ENCODE measurements at regions of chr17 and their contacts with region 1.

Region 1: GRCh38 chr17:43695970-43696865 is 34.5 kb upstream of the MEOX1 start:
- DNase-seq: peak in 1 of 2 donors; percentile 49
- H3K4me3 ChIP-seq: no peak overlapping the region
- H3K27ac ChIP-seq: no peak overlapping the region
- H3K4me1 ChIP-seq: peaks cover 0 to 12% (median 5%) of the 10 kb centered on the region in 4 donors
- H3K27me3 ChIP-seq: peaks cover 0 to 8% (median 0%) of the 10 kb centered on the region in 3 donors
- CTCF ChIP-seq: no peak
- EP300 ChIP-seq: no peak
- POLR2A ChIP-seq: no peak

Region 2: DNA sequence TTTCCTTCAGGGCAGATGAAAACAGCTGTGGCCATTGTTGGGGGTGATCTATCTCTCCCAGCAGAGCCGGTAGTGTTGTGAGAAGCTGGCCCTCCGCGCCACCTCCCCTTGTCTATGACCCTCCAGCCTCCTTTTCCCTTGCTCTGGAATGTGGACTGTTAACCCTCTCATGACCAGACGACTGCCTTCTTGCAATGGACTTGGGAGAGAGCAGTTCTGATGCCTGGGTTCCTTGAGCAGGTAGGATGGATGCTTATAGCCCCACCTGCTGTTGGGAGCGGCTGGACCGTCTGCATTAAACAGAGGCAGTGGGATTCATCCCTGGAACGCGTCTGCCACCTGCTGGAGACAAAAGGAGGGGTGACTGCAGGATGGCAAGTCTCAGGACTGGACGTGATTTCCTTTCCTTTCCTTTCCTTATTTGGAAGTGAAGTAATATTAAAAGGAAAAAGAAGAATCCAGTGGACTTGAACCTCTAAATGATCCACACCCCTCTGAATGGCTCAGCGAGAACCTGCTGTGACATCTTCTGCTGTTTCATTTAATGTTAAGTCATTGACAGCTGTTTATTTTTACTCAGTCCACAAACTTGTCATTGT is 64.1 kb after region 1 on chr17:
- intact Hi-C with region 1: loop called (anchors 5 kb)
- DNase-seq: peak; percentile 96 to 97
- H3K4me3 ChIP-seq: no peak overlapping the region
- H3K27ac ChIP-seq: no peak overlapping the region
- H3K4me1 ChIP-seq: peaks cover 3 to 19% (median 4%) of the 10 kb centered on the region in 4 donors
- H3K27me3 ChIP-seq: peaks cover 11 to 37% (median 22%) of the 10 kb centered on the region in 3 donors
- CTCF ChIP-seq: peak in 5 of 7 experiments; percentile 86 to 100 (median 96)
- EP300 ChIP-seq: no peak
- POLR2A ChIP-seq: no peak

Measured in stomach (tissue), 19 donors.